ENCODE measurements at regions of chr15 and their contacts with region 1.

Region 1: GRCh38 chr15:83248151-83249029 is 36.1 kb downstream of the BNC1 start:
- DNase-seq: no peak
- ATAC-seq: peak in 2 of 4 donors; percentile 54 to 56
- H3K4me3 ChIP-seq: no peak overlapping the region
- H3K27ac ChIP-seq: no peak overlapping the region
- H3K4me1 ChIP-seq: no peaks in the 10 kb centered on the region
- H3K27me3 ChIP-seq: peaks cover 0 to 50% (median 0%) of the 10 kb centered on the region in 3 donors
- CTCF ChIP-seq: peak; percentile 93

Region 2: GRCh38 chr15:83380682-83381081 is 132.3 kb after region 1 on chr15:
- intact Hi-C with region 1: loop called in 1 of 2 experiments (anchors 5 kb)
- DNase-seq: no peak
- ATAC-seq: no peak
- H3K4me3 ChIP-seq: no peak overlapping the region
- H3K27ac ChIP-seq: no peak overlapping the region
- H3K4me1 ChIP-seq: no peaks in the 10 kb centered on the region
- H3K27me3 ChIP-seq: peaks cover 0 to 46% (median 10%) of the 10 kb centered on the region in 3 donors
- CTCF ChIP-seq: no peak

Region 3: GRCh38 chr15:83504365-83504764 is 256.0 kb after region 1 on chr15:
- intact Hi-C with region 1: no loop called
- DNase-seq: no peak
- ATAC-seq: no peak
- H3K4me3 ChIP-seq: no peak overlapping the region
- H3K27ac ChIP-seq: no peak overlapping the region
- H3K4me1 ChIP-seq: no peaks in the 10 kb centered on the region
- H3K27me3 ChIP-seq: no peaks in the 10 kb centered on the region
- CTCF ChIP-seq: no peak

Region 4: DNA sequence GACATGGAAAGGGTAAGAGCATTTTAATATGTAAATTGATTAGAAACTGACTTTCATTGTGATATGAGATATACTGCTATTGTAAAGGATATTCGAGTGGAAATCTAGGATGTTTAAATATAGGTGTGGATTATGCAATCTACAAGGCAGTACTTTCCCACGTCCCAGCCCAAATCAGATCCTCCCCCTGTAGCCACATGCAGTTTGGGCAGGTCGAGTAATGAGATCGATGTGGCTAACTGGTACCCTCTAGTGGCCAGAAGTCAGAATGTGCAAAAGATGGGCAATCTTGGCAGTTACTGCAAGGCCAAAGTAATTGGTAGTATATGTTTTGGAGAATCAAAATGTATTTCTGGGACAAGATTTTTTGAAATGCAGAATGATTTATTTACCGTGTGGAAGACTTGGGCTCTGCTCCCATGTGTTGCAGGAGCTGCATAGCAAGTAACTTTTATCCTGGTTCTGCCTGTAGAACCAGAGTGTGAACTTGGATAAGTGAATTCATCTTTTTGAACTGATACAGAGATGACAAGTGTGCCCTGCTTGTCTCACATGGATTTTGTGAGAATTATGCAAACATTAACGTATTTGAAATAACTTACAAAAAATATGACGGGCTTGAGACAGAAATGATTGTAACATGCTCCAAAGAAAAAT is 311.0 kb after region 1 on chr15:
- intact Hi-C with region 1: loop called (anchors 2 to 5 kb)
- DNase-seq: no peak
- ATAC-seq: peak in 3 of 4 donors; percentile 48 to 64 (median 57)
- H3K4me3 ChIP-seq: no peak overlapping the region
- H3K27ac ChIP-seq: no peak overlapping the region
- H3K4me1 ChIP-seq: no peaks in the 10 kb centered on the region
- H3K27me3 ChIP-seq: no peaks in the 10 kb centered on the region
- CTCF ChIP-seq: peak; percentile 68

Region 5: GRCh38 chr15:83665480-83665879 is 417.1 kb after region 1 on chr15:
- intact Hi-C with region 1: no loop called
- DNase-seq: no peak
- ATAC-seq: no peak
- H3K4me3 ChIP-seq: no peak overlapping the region
- H3K27ac ChIP-seq: no peak overlapping the region
- H3K4me1 ChIP-seq: no peaks in the 10 kb centered on the region
- H3K27me3 ChIP-seq: no peaks in the 10 kb centered on the region
- CTCF ChIP-seq: no peak

Measured in psoas muscle (tissue), 8 donors.